ENCODE measurements at regions of chr2 and their contacts with region 1.

Region 1: GRCh38 chr2:42859006-42859552 is 66.7 kb upstream of the HAAO start:
- DNase-seq: peak; percentile 19 to 94
- H3K4me3 ChIP-seq: no peak overlapping the region
- H3K27ac ChIP-seq: no peak overlapping the region
- H3K4me1 ChIP-seq: no peaks in the 10 kb centered on the region; a peak in 1 of 7 replicates
- H3K27me3 ChIP-seq: no peaks in the 10 kb centered on the region
- CTCF ChIP-seq: peak in 2 of 3 experiments; percentile 79 to 85; a peak in 3 of 4 replicates
- EP300 ChIP-seq: no peak
- POLR2A ChIP-seq: no peak
- RAD21 ChIP-seq: peak; percentile 96 to 97

Region 2: DNA sequence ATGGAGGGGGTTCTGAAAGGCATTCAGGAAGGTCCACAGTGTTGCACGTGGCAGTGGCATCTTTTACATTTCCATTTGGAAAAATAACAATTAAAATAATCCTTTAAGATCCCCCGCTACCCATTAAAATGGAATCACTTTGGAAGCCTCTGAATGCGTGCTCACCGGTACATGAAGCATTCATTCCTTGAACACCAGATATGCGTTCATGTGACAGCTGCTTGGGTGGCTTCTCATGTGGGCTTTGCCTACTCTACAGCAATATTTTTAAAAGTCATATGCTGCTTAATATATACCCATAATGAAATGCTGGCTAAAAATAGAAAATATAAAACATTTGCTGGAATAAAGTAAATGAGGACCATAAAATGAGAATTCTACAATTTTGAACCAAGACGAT is 52.3 kb before region 1 on chr2:
- CTCF ChIA-PET with region 1: no interaction called
- POLR2A ChIA-PET with region 1: no interaction called
- DNase-seq: no peak
- H3K4me3 ChIP-seq: no peak overlapping the region
- H3K27ac ChIP-seq: no peak overlapping the region
- H3K4me1 ChIP-seq: peaks cover 0 to 3% (median 0%) of the 10 kb centered on the region in 4 experiments; a peak in 3 of 7 replicates
- H3K27me3 ChIP-seq: no peaks in the 10 kb centered on the region
- CTCF ChIP-seq: no peak
- EP300 ChIP-seq: no peak
- POLR2A ChIP-seq: no peak
- RAD21 ChIP-seq: no peak

Region 3: DNA sequence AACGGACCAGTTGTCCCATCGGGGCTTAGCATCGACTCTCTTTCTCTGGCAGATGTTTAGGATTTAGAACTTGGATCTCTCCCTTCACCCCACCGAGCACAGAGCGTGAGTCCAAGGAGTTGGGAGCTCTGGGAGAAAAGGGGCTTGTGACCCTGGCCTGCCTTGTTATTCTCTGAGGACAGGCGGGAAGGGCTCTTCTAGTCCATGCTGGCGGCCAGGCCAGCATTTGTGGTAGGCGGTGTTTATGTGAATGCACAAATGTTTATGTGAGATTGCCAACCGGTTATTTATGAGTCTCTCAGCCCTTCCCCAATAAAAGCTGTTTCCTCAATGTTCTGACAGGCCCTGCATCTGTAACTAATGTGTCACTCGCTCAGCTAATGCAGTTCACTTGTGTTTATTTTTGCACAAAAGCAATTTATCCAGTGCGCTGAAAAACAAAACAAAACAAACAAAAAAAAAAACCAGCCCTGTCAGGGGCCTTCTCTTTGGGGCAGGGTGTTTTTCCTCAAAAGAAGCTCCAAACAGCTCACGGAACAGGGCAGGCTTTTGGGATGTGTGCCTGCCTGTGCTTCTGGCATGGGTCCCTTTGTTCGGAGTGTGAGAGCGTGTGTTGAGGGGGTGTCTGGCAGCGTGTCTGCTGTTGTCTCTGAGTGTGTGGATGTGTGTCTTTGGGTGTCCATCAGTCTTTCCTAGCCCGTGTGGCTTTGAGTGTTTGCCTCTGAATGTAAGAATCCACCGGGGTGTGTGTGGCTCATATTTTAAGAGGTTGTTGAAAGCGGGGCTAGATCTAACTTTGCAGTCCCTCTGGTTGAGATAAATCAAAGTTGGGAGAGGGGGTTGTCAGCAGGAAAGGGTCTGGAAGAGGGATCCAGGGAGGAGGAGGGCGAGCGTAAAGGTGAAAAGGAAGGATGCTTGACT is 13.9 kb before region 1 on chr2:
- CTCF ChIA-PET with region 1: interaction called, 54 read pairs
- POLR2A ChIA-PET with region 1: no interaction called
- DNase-seq: no peak
- H3K4me3 ChIP-seq: no peak overlapping the region
- H3K27ac ChIP-seq: no peak overlapping the region
- H3K4me1 ChIP-seq: no peaks in the 10 kb centered on the region
- H3K27me3 ChIP-seq: no peaks in the 10 kb centered on the region
- CTCF ChIP-seq: no peak
- EP300 ChIP-seq: no peak
- POLR2A ChIP-seq: no peak
- RAD21 ChIP-seq: no peak

Region 4: DNA sequence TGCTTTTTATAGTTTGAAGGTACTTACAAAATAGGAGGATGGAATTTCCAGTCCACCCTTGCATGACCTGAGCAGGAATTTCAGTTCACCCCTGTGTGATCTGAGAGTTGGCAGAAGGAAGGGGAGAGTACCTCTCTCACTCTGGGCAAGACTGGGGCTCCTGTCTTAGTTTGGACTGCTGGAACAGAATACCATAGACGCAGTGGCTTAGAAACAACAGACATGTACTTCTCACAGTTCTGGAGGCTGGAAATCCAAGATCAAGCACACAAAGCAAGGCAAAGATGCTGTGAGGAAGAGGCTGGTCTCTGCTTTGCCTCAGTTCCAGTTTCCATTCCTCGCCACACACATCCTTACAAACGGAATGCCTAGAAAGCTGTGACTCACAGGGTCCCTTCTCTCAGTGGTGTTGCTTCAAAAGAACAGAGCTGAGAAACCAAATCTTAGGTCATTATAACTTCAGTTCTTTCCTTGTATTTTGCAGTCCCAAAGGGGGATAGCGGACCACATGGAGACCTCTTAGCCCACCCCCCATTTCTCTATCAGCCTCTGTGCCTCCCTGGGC is 42.1 kb after region 1 on chr2:
- CTCF ChIA-PET with region 1: interaction called, 13 read pairs
- POLR2A ChIA-PET with region 1: no interaction called
- DNase-seq: no peak
- H3K4me3 ChIP-seq: no peak overlapping the region
- H3K27ac ChIP-seq: no peak overlapping the region
- H3K4me1 ChIP-seq: peaks cover 0 to 3% (median 0%) of the 10 kb centered on the region in 4 experiments; a peak in 2 of 7 replicates
- H3K27me3 ChIP-seq: peaks cover 0 to 1% (median 0%) of the 10 kb centered on the region in 4 experiments; a peak in 1 of 7 replicates
- CTCF ChIP-seq: no peak
- EP300 ChIP-seq: no peak
- POLR2A ChIP-seq: no peak
- RAD21 ChIP-seq: no peak

Region 5: DNA sequence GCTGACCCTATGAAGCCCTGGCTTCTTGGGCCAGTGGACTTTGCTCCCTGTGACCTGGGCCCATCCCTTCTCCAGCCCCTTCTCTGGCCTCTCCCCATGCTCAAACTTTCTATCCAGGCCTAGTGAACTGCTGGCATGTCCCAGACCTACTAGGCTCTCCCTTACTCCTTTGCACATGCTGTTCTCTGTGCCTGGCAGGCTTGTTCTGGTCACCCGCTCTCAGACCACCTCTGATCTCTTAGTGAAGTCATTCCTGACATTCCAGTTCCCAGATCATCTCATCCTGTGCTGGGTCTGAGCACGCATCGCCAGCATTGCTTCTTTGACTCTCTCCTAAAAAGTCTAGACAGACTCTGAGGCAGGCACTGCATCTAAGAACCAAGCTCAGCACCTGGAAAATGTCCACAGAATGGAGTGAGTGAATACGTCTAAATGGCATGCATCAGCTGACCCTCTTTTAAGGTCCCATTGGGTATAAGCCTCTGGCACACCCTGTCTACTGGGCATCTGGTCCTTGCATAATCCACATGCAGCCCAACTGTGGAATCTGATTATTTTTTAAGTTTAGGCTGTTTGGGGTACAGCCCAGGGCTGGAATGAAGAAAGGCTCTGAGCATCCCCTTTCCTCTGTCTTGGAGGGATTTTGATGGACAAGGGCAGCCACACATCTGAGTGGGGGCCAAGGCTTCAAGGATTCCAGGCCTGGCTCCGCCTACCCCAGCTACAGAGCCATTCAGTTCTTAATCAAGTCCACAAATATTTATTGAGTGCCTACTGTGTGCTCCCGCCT is 63.9 kb after region 1 on chr2:
- CTCF ChIA-PET with region 1: interaction called, 37 read pairs
- POLR2A ChIA-PET with region 1: no interaction called
- DNase-seq: no peak
- H3K4me3 ChIP-seq: no peak overlapping the region
- H3K27ac ChIP-seq: no peak overlapping the region
- H3K4me1 ChIP-seq: peaks cover 14 to 30% (median 20%) of the 10 kb centered on the region in 4 experiments
- H3K27me3 ChIP-seq: no peaks in the 10 kb centered on the region
- CTCF ChIP-seq: no peak
- EP300 ChIP-seq: no peak
- POLR2A ChIP-seq: no peak
- RAD21 ChIP-seq: no peak

Region 6: GRCh38 chr2:42935692-42936681 is 76.9 kb after region 1 on chr2:
- CTCF ChIA-PET with region 1: interaction called, 18 read pairs
- POLR2A ChIA-PET with region 1: interaction called, 3 read pairs
- DNase-seq: no peak
- H3K4me3 ChIP-seq: no peak overlapping the region
- H3K27ac ChIP-seq: no peak overlapping the region
- H3K4me1 ChIP-seq: peaks cover 2 to 11% (median 6%) of the 10 kb centered on the region in 4 experiments
- H3K27me3 ChIP-seq: no peaks in the 10 kb centered on the region
- CTCF ChIP-seq: no peak
- EP300 ChIP-seq: no peak
- POLR2A ChIP-seq: no peak
- RAD21 ChIP-seq: no peak

Region 7: DNA sequence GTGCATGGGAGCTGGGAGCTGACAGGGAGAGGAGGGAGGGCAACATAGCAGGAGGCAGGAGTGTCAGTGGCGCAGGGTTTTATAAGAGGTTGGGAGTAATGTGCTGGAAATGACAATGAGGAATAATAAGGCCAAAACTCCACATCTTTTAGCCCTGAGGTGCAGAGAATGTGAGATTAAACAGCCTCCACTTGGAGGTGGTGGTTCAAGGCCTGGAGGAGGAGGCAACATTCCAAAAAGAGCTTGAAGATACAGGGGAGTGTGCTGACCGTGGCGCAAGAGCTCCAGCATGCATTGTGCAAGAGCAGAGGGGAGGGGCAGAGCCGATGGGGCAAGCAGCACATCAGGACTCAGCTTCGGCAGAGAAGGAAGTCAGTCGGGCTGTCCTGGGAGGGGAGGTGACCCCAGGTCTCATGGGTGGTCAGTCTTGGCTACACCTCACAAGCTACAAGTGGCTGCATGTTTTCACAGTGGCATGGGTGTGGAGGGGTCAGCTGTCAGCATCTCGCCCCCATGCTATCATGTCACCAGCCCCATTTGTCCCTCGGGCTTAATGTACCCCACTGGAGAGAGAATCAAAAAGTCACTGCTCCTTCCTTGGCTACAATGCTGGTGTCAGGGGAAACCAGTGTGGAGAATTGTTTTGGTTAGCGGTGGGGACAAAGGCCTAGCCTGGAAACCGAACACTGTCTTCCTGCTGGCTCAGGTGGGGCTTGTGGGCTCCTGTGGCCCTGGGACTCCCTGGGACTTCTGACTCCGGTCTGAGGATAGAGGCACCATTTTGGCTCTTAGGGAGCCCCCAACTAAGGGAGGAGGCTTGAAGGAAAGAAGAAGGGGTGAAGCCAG is 159.3 kb after region 1 on chr2:
- CTCF ChIA-PET with region 1: interaction called, 70 read pairs
- POLR2A ChIA-PET with region 1: no interaction called
- DNase-seq: no peak
- H3K4me3 ChIP-seq: no peak overlapping the region
- H3K27ac ChIP-seq: no peak overlapping the region
- H3K4me1 ChIP-seq: peaks cover 0 to 7% (median 4%) of the 10 kb centered on the region in 4 experiments; a peak in 4 of 7 replicates
- H3K27me3 ChIP-seq: no peaks in the 10 kb centered on the region
- CTCF ChIP-seq: no peak
- EP300 ChIP-seq: no peak
- POLR2A ChIP-seq: no peak
- RAD21 ChIP-seq: no peak

Region 8: DNA sequence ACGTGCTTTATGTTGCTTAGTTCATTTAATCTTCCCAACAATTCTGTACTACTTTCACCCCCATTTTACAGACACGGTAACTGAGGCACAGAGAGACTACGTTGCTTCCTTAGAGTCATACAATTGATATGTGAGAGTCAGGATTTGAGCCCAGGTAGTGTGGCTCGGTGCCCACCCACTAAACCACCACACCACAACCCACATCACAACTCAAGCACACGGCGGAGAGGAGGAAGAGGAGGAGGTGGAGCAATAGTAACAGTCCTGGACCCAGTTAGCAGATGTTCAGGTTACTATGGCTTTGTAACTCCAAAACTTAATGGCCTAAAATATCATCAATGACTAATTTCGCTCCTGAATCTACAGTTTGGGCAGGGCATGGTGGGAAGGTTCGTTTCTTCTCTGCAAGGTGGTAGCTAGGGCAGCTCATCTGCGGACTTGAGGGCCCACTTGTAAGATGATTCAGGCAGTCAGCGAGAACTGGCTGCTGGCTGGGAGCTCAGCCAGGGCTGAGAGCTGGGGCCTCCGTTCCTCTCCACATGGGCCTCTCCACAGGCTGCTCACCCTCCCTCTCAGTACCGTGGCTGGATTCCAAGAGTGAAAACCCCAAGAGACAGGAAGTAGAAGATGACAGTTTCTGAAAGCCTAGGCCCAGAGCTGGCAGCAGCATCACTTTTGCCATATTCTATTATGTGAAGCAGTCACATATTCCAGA is 200.3 kb after region 1 on chr2:
- CTCF ChIA-PET with region 1: no interaction called
- POLR2A ChIA-PET with region 1: no interaction called
- DNase-seq: no peak
- H3K4me3 ChIP-seq: no peak overlapping the region
- H3K27ac ChIP-seq: no peak overlapping the region
- H3K4me1 ChIP-seq: peaks cover 7 to 18% (median 11%) of the 10 kb centered on the region in 4 experiments
- H3K27me3 ChIP-seq: no peaks in the 10 kb centered on the region
- CTCF ChIP-seq: no peak
- EP300 ChIP-seq: no peak
- POLR2A ChIP-seq: no peak
- RAD21 ChIP-seq: no peak

Region 9: GRCh38 chr2:43158259-43158880 is 299.3 kb after region 1 on chr2:
- CTCF ChIA-PET with region 1: no interaction called
- POLR2A ChIA-PET with region 1: no interaction called
- DNase-seq: no peak
- H3K4me3 ChIP-seq: no peak overlapping the region
- H3K27ac ChIP-seq: no peak overlapping the region
- H3K4me1 ChIP-seq: peaks cover 0 to 15% (median 5%) of the 10 kb centered on the region in 4 experiments; a peak in 5 of 7 replicates
- H3K27me3 ChIP-seq: peaks cover 0 to 2% (median 0%) of the 10 kb centered on the region in 4 experiments; a peak in 1 of 7 replicates
- CTCF ChIP-seq: no peak
- EP300 ChIP-seq: no peak
- POLR2A ChIP-seq: no peak
- RAD21 ChIP-seq: no peak

Region 10: DNA sequence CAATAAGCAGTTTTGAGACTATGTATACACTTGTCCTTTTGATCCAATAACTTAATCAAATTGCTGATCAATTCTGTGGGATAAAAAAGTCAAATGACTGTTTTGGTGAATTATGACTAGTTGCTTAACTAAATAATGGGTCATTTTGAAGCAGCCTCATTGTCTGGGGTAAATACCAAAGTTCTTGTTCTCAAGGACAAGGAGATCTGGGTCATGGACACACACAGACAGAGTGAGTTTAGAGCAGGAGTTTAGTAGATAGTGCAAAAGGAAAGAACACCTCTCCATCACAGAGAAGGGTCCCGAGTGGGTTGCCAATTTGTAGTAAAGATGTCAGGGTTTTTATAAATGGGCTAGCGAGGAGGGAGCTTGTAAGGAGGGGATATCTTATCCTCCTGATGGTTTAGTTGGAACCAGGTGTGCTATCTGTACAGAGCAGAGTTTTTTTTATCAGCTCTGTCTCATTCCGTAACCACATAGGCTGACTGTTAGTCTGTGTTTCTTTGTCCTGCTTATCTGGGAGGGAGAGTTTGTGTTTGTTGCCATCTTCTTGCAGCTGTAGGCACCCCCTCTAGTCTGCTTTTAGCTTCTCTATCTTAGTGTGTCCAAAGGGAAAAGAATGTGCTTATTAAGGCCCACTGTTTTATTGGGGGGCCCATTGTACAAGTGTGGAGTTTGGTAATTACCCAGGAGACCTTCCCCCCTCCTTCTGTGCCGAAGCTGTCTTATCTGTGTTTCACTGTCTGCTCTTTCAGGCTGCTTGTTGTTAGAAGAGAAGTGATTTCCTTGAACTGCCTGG is 865.8 kb after region 1 on chr2:
- CTCF ChIA-PET with region 1: no interaction called
- POLR2A ChIA-PET with region 1: no interaction called
- DNase-seq: no peak
- H3K4me3 ChIP-seq: no peak overlapping the region
- H3K27ac ChIP-seq: no peak overlapping the region
- H3K4me1 ChIP-seq: peaks cover 0 to 4% (median 2%) of the 10 kb centered on the region in 4 experiments; a peak in 2 of 7 replicates
- H3K27me3 ChIP-seq: no peaks in the 10 kb centered on the region
- CTCF ChIP-seq: no peak
- EP300 ChIP-seq: no peak
- POLR2A ChIP-seq: no peak
- RAD21 ChIP-seq: no peak